ENCODE measurements at regions of chr5 and their contacts with region 1.

Region 1: GRCh38 chr5:37005946-37006540 is 129.5 kb downstream of the NIPBL start:
- DNase-seq: peak; percentile 7
- ATAC-seq: no peak
- H3K4me3 ChIP-seq: no peak overlapping the region
- H3K27ac ChIP-seq: no peak overlapping the region
- H3K4me1 ChIP-seq: peaks cover 15% of the 10 kb centered on the region
- H3K27me3 ChIP-seq: no peaks in the 10 kb centered on the region
- CTCF ChIP-seq: peak; percentile 46
- EP300 ChIP-seq: no peak
- POLR2A ChIP-seq: no peak
- RAD21 ChIP-seq: no peak

Region 2: GRCh38 chr5:36739751-36740221 is 266.3 kb before region 1 on chr5:
- CTCF ChIA-PET with region 1: no interaction called
- POLR2A ChIA-PET with region 1: no interaction called
- in situ Hi-C with region 1: loop called (anchors 10 kb)
- intact Hi-C with region 1: loop called (anchors 1 kb)
- DNase-seq: peak; percentile 39
- ATAC-seq: peak; percentile 50
- H3K4me3 ChIP-seq: no peak overlapping the region
- H3K27ac ChIP-seq: no peak overlapping the region
- H3K4me1 ChIP-seq: peaks cover 11% of the 10 kb centered on the region
- H3K27me3 ChIP-seq: peaks cover 0 to 19% of the 10 kb centered on the region in 2 experiments; a peak in 1 of 5 replicates
- CTCF ChIP-seq: peak; percentile 75
- EP300 ChIP-seq: no peak
- POLR2A ChIP-seq: no peak
- RAD21 ChIP-seq: peak; percentile 42; the same call in 1 of the 2 replicates

Region 3: DNA sequence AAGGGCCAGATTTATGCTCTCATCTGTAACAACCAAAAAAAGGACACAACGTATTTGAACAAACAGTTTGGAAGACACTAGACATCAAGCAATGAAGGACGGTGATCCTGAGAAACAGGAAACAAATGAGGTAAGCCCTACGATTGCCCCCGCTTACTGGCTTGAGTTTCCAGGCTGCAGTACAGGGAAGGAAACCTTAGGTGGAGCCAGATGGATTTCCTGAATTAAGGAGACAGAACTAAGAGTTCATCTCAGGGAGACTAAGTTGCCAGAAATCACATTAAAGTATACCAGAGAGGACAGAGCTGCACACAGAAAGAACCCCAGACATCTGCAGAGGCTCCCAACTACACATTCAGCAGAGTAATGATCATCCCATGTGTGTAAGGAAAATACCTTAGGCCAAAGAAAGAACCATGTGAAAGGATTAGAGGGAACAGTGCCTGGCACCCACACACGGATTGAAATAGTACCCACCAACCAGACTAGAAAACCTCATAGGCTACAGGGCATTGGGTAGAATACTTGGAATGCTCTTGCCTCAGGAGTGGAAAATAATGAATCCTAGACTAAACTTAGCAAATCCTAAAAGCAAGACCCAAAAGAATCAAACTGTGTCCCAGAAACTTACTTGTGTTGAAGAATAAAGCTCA is 228.8 kb before region 1 on chr5:
- CTCF ChIA-PET with region 1: no interaction called
- POLR2A ChIA-PET with region 1: no interaction called
- in situ Hi-C with region 1: no loop called
- intact Hi-C with region 1: loop called (anchors 1 kb)
- DNase-seq: peak; percentile 27
- ATAC-seq: peak; percentile 96
- H3K4me3 ChIP-seq: no peak overlapping the region
- H3K27ac ChIP-seq: no peak overlapping the region
- H3K4me1 ChIP-seq: no peaks in the 10 kb centered on the region
- H3K27me3 ChIP-seq: no peaks in the 10 kb centered on the region
- CTCF ChIP-seq: peak; percentile 60
- EP300 ChIP-seq: no peak
- POLR2A ChIP-seq: no peak
- RAD21 ChIP-seq: no peak

Region 4: DNA sequence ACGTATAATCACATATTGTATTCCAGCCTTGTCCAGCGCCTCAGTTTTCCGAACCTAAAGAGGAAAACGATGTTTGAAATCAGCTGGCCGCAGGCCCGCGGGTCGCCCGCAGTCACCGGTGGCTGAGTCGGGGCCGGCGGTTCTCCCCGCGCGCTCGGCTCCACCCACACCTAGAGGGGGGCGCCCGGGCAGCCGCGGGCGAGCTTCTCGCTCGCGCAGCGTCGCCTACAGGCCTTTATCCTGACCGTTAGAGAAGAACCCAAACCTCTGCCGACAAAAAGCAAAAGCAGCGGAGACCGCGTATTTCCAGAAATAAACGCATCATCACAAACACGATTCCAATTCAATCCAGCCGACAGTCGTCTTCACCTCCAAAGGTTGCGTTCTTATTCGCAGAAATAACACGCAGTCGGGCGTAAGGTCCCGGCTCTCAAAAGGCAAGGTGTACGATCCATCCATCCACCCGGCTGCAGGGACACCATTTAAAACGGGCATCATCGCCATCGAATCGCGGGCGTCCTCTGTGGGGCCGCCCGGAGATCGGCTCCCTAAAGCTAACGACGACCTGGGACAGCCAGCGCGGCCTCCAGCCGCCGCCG is 130.2 kb before region 1 on chr5:
- CTCF ChIA-PET with region 1: no interaction called
- POLR2A ChIA-PET with region 1: no interaction called
- in situ Hi-C with region 1: no loop called
- intact Hi-C with region 1: loop called (anchors 5 kb)
- DNase-seq: peak; percentile 59
- ATAC-seq: peak; percentile 86
- H3K4me3 ChIP-seq: peak overlapping the region; percentile 95 to 99 (median 99)
- H3K27ac ChIP-seq: peak overlapping the region; percentile 96
- H3K4me1 ChIP-seq: peaks cover 37% of the 10 kb centered on the region
- H3K27me3 ChIP-seq: peaks cover 0 to 3% of the 10 kb centered on the region in 2 experiments; a peak in 1 of 5 replicates
- CTCF ChIP-seq: peak; percentile 66
- EP300 ChIP-seq: no peak
- POLR2A ChIP-seq: peak in 1 of 2 experiments; percentile 9; a peak in 1 of 4 replicates
- RAD21 ChIP-seq: peak; percentile 25; the same call in 1 of the 2 replicates

Region 5: DNA sequence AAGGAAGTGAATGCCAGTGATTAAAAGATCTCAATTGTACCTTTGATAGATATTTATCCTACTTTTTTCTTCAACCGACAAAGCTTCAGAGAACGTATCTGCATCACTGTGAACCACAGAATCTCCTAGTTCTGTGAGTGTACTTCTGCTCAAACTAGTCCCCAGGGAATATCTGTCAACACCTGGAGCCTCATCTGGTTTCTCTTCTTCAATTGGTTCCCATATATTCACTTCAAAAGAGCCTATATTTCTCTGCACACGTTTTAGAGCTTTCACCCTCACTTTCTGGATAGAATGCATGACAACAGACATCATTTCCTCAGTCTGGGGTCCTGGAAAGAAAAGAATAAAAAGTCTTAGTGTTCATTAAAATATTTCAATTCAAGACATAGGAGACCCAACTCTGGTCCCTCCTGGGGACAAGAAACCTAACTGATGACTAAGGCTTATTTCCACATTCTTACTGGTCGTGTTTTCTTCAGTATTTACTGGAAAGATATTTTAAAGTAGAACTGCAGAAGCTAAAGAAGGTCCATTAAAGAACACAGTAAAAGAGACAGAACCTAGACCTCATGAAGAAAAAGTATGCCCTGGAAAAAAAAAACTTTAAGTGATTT is 178.8 kb after region 1 on chr5:
- CTCF ChIA-PET with region 1: no interaction called
- POLR2A ChIA-PET with region 1: no interaction called
- in situ Hi-C with region 1: no loop called
- intact Hi-C with region 1: no loop called
- DNase-seq: no peak
- ATAC-seq: no peak
- H3K4me3 ChIP-seq: no peak overlapping the region
- H3K27ac ChIP-seq: no peak overlapping the region
- H3K4me1 ChIP-seq: no peaks in the 10 kb centered on the region
- H3K27me3 ChIP-seq: no peaks in the 10 kb centered on the region
- CTCF ChIP-seq: no peak
- EP300 ChIP-seq: no peak
- POLR2A ChIP-seq: no peak
- RAD21 ChIP-seq: no peak

Region 6: DNA sequence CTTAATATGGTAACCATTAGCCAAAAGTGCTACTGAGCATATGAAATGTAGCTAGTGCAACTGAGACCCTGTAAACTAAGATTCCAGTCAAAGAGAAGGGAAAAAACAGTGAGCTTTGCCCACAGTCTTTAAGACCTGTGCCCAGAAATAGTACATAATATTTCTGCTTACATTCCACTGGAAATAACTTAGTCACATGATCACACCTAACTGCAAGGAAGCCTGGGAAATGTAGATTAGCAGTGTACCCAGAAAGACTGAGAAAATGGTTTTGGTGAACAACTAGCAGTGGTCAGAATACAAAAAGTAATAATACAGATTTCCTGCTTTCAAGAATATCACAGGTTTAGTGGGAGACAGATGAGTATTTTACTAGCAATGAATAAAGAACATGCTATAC is 245.6 kb after region 1 on chr5:
- CTCF ChIA-PET with region 1: no interaction called
- POLR2A ChIA-PET with region 1: no interaction called
- in situ Hi-C with region 1: no loop called
- intact Hi-C with region 1: no loop called
- DNase-seq: no peak
- ATAC-seq: no peak
- H3K4me3 ChIP-seq: no peak overlapping the region
- H3K27ac ChIP-seq: no peak overlapping the region
- H3K4me1 ChIP-seq: peaks cover 22% of the 10 kb centered on the region
- H3K27me3 ChIP-seq: no peaks in the 10 kb centered on the region; a peak in 1 of 5 replicates
- CTCF ChIP-seq: no peak
- EP300 ChIP-seq: no peak
- POLR2A ChIP-seq: no peak
- RAD21 ChIP-seq: no peak

Measured in HepG2 (cell line).